ENCODE measurements at regions of chr15 and their contacts with region 1.

Region 1: GRCh38 chr15:92053840-92054239 is 200.3 kb downstream of the SLCO3A1 start:
- DNase-seq: no peak
- ATAC-seq: no peak
- H3K4me3 ChIP-seq: no peak overlapping the region
- H3K27ac ChIP-seq: no peak overlapping the region
- H3K4me1 ChIP-seq: peaks cover 19 to 80% (median 45%) of the 10 kb centered on the region in 9 donors
- H3K27me3 ChIP-seq: no peaks in the 10 kb centered on the region
- CTCF ChIP-seq: peak in 4 of 9 donors; percentile 17 to 31 (median 25)

Region 2: GRCh38 chr15:91981821-91982801 is 71.7 kb before region 1 on chr15:
- intact Hi-C with region 1: loop called in 2 of 10 experiments (anchors 5 to 10 kb)
- DNase-seq: no peak
- ATAC-seq: peak in 1 of 8 donors; percentile 35
- H3K4me3 ChIP-seq: no peak overlapping the region
- H3K27ac ChIP-seq: peak overlapping the region in 3 of 10 donors; percentile 64 to 86 (median 78)
- H3K4me1 ChIP-seq: peaks cover 14 to 78% (median 55%) of the 10 kb centered on the region in 9 donors
- H3K27me3 ChIP-seq: no peaks in the 10 kb centered on the region
- CTCF ChIP-seq: no peak

Region 3: GRCh38 chr15:92005154-92005553 is 48.7 kb before region 1 on chr15:
- intact Hi-C with region 1: loop called in 1 of 10 experiments (anchors 10 kb)
- DNase-seq: no peak
- ATAC-seq: no peak
- H3K4me3 ChIP-seq: no peak overlapping the region
- H3K27ac ChIP-seq: no peak overlapping the region
- H3K4me1 ChIP-seq: peaks cover 2 to 54% (median 33%) of the 10 kb centered on the region in 9 donors
- H3K27me3 ChIP-seq: no peaks in the 10 kb centered on the region
- CTCF ChIP-seq: no peak

Region 4: GRCh38 chr15:92097474-92098178 is 43.8 kb after region 1 on chr15:
- intact Hi-C with region 1: no loop called
- DNase-seq: peak in 1 of 2 donors; percentile 21
- ATAC-seq: peak; percentile 69 to 93 (median 77)
- H3K4me3 ChIP-seq: no peak overlapping the region
- H3K27ac ChIP-seq: no peak overlapping the region
- H3K4me1 ChIP-seq: peaks cover 0 to 45% (median 14%) of the 10 kb centered on the region in 9 donors
- H3K27me3 ChIP-seq: no peaks in the 10 kb centered on the region
- CTCF ChIP-seq: peak; percentile 24 to 83 (median 71)

Region 5: GRCh38 chr15:92158434-92158833 is 104.6 kb after region 1 on chr15:
- intact Hi-C with region 1: no loop called
- DNase-seq: no peak
- ATAC-seq: no peak
- H3K4me3 ChIP-seq: no peak overlapping the region
- H3K27ac ChIP-seq: no peak overlapping the region
- H3K4me1 ChIP-seq: peaks cover 0 to 10% (median 0%) of the 10 kb centered on the region in 9 donors
- H3K27me3 ChIP-seq: no peaks in the 10 kb centered on the region
- CTCF ChIP-seq: no peak